Left lung (tissue), 14 donors: ENCODE measurements at regions of chr5 and their contacts with region 1.

Region 1: DNA sequence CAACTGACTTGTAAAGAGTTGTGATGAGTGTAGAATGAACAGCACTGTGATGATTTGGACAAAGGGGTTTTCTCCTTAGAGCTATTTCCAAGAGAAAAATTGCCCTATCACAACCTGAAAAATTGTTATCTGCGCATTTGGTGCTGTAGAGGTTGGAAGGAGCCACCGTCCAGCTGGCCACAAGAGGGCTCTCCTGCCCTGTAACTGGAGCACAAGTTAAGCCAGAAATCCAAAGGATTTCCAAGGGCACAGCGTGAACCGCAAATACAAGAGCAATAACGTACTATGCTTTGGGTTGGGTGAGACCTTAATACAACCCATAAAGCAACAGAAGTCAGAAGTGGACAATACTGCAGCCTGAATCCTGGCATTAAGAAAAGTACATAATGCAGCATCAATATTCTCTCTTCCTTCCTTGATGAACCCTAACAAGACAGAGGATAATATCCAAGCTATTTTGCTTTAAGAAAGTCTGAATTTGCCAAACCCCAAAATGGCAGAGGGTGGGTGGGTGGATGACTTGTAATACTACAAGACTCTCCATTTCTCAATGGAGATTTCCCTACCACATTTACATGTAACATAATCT is 56.8 kb upstream of the SMIM32 start:
- DNase-seq: peak; percentile 39 to 71 (median 49)
- ATAC-seq: peak; percentile 91
- H3K4me3 ChIP-seq: no peak overlapping the region
- H3K27ac ChIP-seq: no peak overlapping the region
- H3K4me1 ChIP-seq: no peaks in the 10 kb centered on the region
- H3K27me3 ChIP-seq: peaks cover 4 to 23% of the 10 kb centered on the region in 2 donors
- CTCF ChIP-seq: peak; percentile 52 to 57

Region 2: DNA sequence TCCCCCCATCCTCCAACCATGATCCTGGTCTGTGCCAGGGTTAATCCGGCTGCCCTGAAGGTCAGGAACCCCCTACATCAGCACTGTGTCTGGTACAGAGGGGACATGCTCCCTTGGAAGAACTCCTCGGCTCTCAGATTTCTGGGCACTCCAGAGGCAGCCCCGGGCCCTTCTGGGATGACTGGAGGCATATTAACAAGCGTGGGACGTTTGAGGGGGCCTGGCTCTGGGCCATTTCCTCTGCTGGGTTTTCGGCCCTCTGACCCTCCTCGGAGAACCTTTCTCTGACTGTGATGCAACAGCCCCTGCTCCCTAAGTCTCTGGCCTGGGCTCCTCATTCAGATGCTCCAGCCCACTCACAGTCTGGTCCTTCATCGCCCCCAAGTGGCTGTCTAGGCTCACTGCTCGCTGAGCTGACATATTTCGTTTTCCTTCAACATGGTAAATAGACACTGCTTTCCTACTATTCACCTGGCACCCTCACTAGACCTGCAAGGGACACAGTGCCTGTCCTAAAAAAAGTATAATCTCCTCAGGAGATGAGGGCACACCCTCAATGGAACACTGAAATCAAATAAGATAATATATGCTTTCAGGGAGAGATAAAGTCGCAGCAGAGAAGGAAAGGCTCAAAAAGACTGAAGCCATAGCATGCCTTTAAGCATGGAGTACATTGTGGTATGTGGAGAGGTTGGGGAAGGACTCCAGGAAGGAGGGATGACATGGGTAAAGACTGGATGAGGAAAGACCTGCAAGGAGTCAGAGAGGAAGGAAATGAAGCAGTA is 520.3 kb after region 1 on chr5:
- intact Hi-C with region 1: loop called in 1 of 2 experiments (anchors 10 kb)
- DNase-seq: peak; percentile 37 to 76 (median 42)
- ATAC-seq: peak; percentile 96
- H3K4me3 ChIP-seq: no peak overlapping the region
- H3K27ac ChIP-seq: no peak overlapping the region
- H3K4me1 ChIP-seq: no peaks in the 10 kb centered on the region
- H3K27me3 ChIP-seq: no peaks in the 10 kb centered on the region
- CTCF ChIP-seq: peak; percentile 54 to 71

Region 3: DNA sequence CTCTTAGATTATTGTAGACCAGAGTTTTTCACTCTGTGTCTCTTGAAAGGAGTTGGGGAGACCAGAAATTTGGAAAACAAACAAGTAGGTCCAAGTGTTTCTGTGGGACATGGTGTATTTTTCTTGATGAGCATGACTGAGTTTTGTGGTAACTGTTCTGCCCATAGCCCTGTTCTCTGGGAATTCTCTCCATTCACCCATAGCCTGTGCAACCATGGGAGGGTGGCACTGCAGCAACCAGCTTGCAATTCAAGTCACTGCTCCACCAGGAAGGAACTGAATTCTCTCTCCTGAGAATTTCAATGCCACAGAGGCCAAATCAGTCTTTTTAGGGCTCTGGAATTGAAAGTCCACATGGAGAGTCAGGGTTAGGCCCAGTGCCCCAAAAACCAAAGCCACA is 590.8 kb after region 1 on chr5:
- intact Hi-C with region 1: no loop called
- DNase-seq: no peak
- ATAC-seq: no peak
- H3K4me3 ChIP-seq: no peak overlapping the region
- H3K27ac ChIP-seq: no peak overlapping the region
- H3K4me1 ChIP-seq: no peaks in the 10 kb centered on the region
- H3K27me3 ChIP-seq: no peaks in the 10 kb centered on the region
- CTCF ChIP-seq: no peak